ENCODE measurements at regions of chr21 and their contacts with region 1.

Region 1: GRCh38 chr21:14762734-14763694 is 216.9 kb upstream of the SAMSN1 start:
- DNase-seq: no peak
- ATAC-seq: peak; percentile 90
- H3K4me3 Mint-ChIP-seq: no peak overlapping the region
- H3K27ac Mint-ChIP-seq: no peak overlapping the region
- H3K4me1 Mint-ChIP-seq: peaks cover 9% of the 10 kb centered on the region
- H3K27me3 Mint-ChIP-seq: no peaks in the 10 kb centered on the region

Region 2: GRCh38 chr21:14581902-14582457 is 181.0 kb before region 1 on chr21:
- CTCF ChIA-PET with region 1: no interaction called
- POLR2A ChIA-PET with region 1: no interaction called
- DNase-seq: no peak
- ATAC-seq: peak; percentile 65
- H3K4me3 Mint-ChIP-seq: peak overlapping the region; percentile 4
- H3K27ac Mint-ChIP-seq: peak overlapping the region; percentile 2
- H3K4me1 Mint-ChIP-seq: peaks cover 9% of the 10 kb centered on the region
- H3K27me3 Mint-ChIP-seq: no peaks in the 10 kb centered on the region

Region 3: DNA sequence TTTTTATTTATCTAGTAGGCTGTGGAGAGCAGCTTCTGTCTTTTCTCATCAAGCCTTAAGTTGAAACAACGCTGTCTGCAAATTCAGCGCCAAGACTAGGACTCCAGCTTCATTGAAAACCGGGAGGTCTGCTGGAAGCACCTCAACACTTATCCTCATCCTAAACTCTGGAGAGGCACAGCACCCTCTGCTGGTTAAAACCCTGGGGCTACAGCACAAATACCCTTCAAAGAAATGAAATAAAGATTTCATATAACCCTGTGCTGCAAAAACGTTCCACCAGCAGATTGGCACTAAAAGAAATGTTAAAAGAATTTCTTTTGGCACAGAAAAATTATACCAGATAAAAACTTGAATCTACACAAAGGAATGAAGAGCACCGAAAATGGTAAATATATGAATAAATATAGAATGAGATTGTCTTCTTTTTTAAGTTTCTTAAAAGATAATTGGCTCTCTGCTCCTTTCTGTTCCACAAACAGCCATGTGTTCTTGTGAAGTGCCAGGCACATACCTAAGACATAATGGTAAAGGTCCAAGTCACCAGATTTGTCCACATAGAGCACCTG is 10.8 kb after region 1 on chr21:
- CTCF ChIA-PET with region 1: interaction called, 12 read pairs
- POLR2A ChIA-PET with region 1: interaction called, 3 read pairs
- DNase-seq: peak; percentile 74
- ATAC-seq: no peak
- H3K4me3 Mint-ChIP-seq: no peak overlapping the region
- H3K27ac Mint-ChIP-seq: no peak overlapping the region
- H3K4me1 Mint-ChIP-seq: peaks cover 14% of the 10 kb centered on the region
- H3K27me3 Mint-ChIP-seq: peaks cover 2% of the 10 kb centered on the region